ENCODE measurements at regions of chr4 and their contacts with region 1.

Region 1: GRCh38 chr4:125750828-125751466 is 436.2 kb downstream of the FAT4 start:
- DNase-seq: peak; percentile 65
- H3K4me3 ChIP-seq: no peak overlapping the region
- H3K27ac ChIP-seq: no peak overlapping the region
- H3K27me3 ChIP-seq: no peaks in the 10 kb centered on the region
- CTCF ChIP-seq: peak; percentile 70

Region 2: GRCh38 chr4:125314676-125315575 is 436.0 kb before region 1 on chr4 and contains the start of gene FAT4:
- in situ Hi-C with region 1: loop called (anchors 25 kb)
- DNase-seq: peak; percentile 97
- H3K4me3 ChIP-seq: peak within 1 kb of the TSS; percentile 91
- H3K27ac ChIP-seq: peak within 1 kb of the TSS; percentile 86
- H3K27me3 ChIP-seq: no peaks in the 10 kb centered on the region
- CTCF ChIP-seq: peak; percentile 41

Region 3: DNA sequence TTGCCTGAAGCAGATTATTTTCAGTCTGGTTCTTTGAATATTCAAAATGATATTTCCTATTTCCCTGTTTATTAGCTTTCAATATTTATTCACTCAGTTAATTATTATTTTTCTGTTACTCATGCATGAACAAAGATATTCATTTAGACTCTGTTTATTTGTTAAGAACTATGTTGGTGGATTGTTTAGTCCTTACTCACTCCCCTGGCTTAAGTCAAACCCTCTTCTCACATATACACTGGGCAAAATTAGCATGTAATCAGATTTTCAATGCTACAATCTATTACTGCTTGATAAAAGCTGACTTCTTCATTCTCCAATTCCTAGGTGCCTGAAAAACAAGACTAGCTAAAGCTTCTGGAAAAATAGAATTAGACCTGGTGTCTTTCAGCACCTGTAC is 100.4 kb before region 1 on chr4:
- in situ Hi-C with region 1: no loop called
- DNase-seq: no peak
- H3K4me3 ChIP-seq: no peak overlapping the region
- H3K27ac ChIP-seq: no peak overlapping the region
- H3K27me3 ChIP-seq: no peaks in the 10 kb centered on the region
- CTCF ChIP-seq: no peak

Region 4: GRCh38 chr4:125904802-125905201 is 153.9 kb after region 1 on chr4:
- in situ Hi-C with region 1: no loop called
- DNase-seq: no peak
- H3K4me3 ChIP-seq: no peak overlapping the region
- H3K27ac ChIP-seq: no peak overlapping the region
- H3K27me3 ChIP-seq: no peaks in the 10 kb centered on the region
- CTCF ChIP-seq: no peak

Region 5: DNA sequence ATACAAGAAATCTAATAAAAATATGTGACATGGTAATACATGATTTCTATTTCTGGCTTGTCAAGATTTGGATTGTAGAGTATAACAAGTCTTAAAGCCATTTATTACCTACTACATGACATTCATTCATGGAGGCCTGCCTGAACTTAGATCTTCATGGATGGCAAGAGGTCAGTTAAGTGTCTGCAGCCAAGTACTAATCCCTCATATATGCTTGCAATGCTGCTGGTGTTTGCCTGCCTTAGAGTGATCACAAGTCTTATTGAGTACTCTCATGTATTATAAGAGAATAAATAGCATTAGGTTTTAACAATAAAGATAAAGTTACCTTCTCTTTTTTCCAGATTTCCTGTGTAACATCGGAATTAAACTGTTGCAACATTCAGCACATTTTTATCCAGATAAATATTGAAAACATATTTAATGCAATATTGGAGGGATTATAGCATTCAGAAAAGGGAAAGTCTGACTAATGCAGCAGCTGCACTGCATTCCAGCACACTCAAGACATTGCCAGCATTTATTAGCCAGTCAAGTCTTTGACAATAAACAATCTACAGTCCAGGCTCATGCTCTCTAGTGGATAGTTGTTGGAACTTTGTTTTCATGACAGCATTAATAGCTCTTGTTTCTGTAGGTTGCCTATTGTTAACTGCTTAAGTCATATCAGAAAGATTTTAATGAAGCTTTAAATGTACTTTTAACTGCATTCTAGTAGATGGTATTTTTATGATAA is 300.9 kb after region 1 on chr4:
- in situ Hi-C with region 1: no loop called
- DNase-seq: peak; percentile 45
- H3K4me3 ChIP-seq: no peak overlapping the region
- H3K27ac ChIP-seq: no peak overlapping the region
- H3K27me3 ChIP-seq: no peaks in the 10 kb centered on the region
- CTCF ChIP-seq: peak; percentile 27

Measured in brain microvascular endothelial cell (primary cell).